ENCODE measurements at regions of chr22 and their contacts with region 1.

Region 1: GRCh38 chr22:38272373-38273134 is at the start of gene TMEM184B:
- DNase-seq: peak; percentile 94
- total RNA-seq, gene TMEM184B: 42.9 to 49.7 TPM

Region 2: DNA sequence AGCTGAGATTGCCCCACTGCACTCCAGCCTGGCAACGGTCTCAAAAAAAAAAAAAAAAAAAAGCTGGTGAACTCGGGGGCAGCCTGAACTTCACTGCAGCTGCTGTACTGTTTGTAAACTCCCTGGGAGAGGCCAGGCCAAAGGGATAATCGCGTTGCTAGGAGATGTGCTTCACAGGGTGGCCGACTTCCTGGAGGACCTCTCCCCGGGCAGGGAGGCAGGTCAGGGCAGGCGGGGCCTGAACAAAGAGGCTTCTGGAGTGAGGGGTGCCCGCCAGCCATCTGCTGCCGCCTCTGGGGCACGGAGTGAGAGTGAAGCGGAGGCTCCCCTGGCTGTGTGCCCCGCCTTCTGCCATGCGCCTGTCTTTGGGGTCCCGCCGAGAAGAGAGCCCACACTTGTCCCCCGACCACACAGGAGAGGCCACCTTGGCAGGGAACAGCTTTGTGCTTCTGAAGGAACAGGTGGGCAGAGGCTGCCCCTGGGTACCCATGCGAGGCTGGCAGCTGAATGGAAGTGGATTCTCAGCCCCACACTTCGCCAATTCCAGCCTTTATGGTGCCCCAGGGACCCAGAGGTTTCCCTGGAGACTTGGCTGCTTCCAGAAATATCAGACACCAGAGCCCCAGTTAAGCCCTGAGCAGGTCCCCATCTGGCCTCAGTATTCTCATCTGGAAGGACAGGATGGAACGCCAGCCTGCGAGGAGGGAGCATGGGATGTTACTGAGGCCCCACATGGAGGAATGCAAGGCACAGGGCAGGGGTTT is 29.4 kb before region 1 on chr22:
- intact Hi-C with region 1: no loop called
- DNase-seq: no peak

Region 3: DNA sequence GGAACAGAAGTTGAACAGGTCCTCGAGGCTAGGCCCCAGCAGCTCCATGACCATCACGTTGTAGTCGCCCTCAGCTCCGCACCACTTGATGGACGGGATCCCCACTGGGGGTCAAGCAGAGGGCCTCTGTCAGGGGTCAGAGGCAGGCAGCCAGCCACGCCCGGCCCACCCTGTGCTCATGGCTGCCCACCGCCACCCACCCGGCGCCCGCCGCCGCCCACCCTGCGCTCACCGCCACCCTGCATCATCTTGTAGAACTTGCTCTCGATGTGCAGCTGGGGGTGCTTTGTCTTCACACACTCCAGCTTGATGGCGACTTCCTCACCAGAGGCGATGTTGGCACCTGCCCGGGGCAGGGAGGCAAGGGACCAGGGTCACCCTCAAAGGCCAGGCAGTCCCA is 30.4 kb after region 1 on chr22:
- intact Hi-C with region 1: loop called in 1 of 2 experiments (anchors 1 kb)
- DNase-seq: no peak

Region 4: DNA sequence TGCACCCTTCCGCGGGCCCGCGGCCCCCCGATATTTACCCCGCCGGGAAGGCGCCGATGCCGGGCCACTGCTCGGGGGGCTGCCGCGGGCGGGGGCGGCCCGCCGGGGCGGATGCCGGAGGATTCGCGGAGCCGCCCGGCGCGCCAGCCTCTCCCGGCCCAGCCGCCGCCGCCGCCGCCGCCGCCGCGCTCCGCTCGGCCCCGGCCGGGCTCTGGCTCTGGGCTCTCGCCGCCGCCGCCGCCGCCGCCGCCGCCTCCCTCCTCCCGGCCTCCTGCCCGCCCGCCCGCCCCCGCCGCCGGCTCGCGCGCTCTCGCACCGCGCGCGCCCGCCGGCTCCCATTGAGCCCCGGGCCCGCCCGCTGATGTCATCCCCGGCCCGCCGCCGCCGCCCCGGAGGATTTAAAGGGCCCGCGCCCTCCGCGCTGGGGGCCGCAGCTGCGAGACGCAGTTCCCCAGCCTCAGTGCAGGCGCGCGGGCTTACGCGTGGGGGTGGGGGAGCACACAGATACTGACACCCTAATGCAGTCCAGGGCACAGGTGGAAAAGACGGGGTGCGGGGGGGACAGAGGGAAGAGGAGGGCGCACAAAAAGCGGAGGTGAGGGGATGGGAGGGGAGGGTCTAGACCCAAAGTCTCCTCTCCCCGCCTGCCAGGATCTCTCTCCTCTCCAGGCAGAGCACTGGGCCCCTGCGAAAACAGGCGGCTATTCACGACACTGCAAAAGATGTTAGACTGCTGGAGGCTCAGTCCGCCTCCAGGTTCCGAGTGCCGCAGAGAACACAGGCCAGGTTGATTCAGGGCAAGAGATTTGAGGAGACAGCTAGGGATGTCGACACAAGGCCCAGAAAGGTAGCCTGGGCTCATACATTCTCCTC is 44.8 kb after region 1 on chr22 and contains the start of gene CSNK1E:
- intact Hi-C with region 1: loop called in 1 of 2 experiments (anchors 1 kb)
- DNase-seq: peak; percentile 93
- total RNA-seq, gene CSNK1E: 70.1 to 88.6 TPM

Measured in posterior vena cava (tissue), 2 donors.